ENCODE measurements at regions of chr3 and their contacts with region 1.

Region 1: DNA sequence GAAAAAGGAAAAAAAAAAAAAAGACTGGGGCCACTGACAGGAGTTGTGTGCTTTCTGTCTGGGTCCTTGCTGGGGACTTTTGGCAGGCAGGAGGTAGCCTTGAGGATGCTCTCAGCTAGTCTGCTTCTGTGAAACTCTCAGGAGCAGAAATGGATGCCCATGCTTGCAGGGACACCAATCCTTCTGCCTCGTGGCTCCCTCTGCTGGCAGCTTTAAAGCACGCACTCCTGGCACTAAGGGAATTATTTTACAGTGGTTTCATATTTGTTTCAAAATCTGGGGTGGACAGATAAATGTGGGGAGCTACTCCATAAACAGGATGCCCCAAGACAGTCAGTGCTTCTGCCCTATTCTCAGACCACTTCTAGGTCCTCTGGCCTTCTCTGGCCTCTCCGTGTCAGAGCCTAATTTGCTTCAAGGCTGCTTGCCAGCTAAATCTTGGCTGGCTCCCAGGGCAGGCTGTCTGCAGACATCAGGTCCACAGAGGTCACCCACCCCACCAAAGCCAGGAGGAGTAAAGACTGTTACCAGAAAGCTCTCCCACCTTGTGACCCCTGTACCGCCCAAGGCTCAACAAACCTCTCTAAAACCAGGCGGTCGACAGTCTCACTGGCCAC is 17.1 kb downstream of the TRAIP start:
- DNase-seq: peak; percentile 52
- H3K4me3 ChIP-seq: no peak overlapping the region
- H3K27ac ChIP-seq: no peak overlapping the region
- H3K4me1 ChIP-seq: no peaks in the 10 kb centered on the region
- H3K27me3 ChIP-seq: no peaks in the 10 kb centered on the region
- CTCF ChIP-seq: peak; percentile 93 to 98

Region 2: DNA sequence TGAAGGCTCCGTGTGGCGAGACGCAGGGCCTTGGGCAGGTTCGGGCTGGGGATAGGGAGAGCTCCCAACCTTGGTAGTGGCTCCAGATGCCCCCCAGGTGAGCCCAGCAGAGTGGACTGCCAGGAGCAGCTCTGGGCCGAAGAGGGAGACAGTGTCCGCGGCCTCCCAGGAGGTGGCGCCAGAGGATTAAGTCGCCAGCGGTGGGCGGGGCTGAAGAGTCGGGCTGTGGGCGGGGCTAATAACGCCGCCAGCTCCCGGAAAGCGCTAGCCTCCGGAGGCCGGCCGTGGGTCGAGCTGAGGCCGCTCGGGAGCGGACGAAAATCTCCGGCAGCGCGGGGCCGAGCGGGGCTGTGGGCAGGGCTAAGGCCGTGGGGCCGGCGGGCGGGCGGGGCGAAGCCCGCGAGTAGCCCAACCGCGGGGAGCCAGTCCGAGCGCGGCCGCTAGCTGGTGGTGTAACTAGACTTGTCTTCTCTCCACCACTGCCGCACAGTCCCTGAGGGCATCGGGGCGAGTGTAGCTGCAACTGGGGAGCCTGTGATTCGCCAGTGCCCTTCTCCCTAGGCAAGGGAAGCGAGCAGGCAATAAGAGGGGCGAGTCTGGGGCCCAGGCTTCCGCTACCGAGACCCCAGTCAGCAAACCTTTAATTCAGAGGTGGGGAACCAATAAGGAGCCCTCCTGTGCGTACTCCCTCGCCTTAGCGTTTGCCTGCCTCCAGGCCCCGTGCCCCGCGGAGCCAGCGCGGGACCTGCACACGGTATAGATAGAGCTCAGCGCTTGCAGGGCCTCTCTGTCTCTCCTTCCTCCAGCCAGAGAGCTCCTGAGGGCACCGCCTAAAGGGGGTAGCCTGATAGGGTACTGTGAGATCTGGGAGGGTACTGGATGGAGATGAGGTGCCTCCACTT is 299.4 kb before region 1 on chr3:
- CTCF ChIA-PET with region 1: no interaction called
- dilution Hi-C with region 1: no loop called
- in situ Hi-C with region 1: no loop called
- intact Hi-C with region 1: loop called (anchors 1 kb)
- DNase-seq: peak; percentile 93
- H3K4me3 ChIP-seq: peak overlapping the region; percentile 30 to 47 (median 42)
- H3K27ac ChIP-seq: no peak overlapping the region
- H3K4me1 ChIP-seq: peaks cover 5% of the 10 kb centered on the region
- H3K27me3 ChIP-seq: no peaks in the 10 kb centered on the region
- CTCF ChIP-seq: peak; percentile 55 to 89

Region 3: GRCh38 chr3:49723628-49724551 is 115.4 kb before region 1 on chr3 and contains the start of gene GMPPB:
- CTCF ChIA-PET with region 1: no interaction called
- dilution Hi-C with region 1: no loop called
- in situ Hi-C with region 1: no loop called
- intact Hi-C with region 1: loop called (anchors 1 kb)
- DNase-seq: peak; percentile 97
- H3K4me3 ChIP-seq: peak within 1 kb of the TSS; percentile 51 to 85 (median 84)
- H3K27ac ChIP-seq: peak within 1 kb of the TSS; percentile 92
- H3K4me1 ChIP-seq: peaks cover 25% of the 10 kb centered on the region
- H3K27me3 ChIP-seq: no peaks in the 10 kb centered on the region
- CTCF ChIP-seq: no peak
- total RNA-seq, gene GMPPB: 19.2 to 38.4 TPM

Region 4: GRCh38 chr3:49746006-49746405 is 93.3 kb before region 1 on chr3:
- CTCF ChIA-PET with region 1: no interaction called
- dilution Hi-C with region 1: no loop called
- in situ Hi-C with region 1: no loop called
- intact Hi-C with region 1: no loop called
- DNase-seq: peak; percentile 77
- H3K4me3 ChIP-seq: no peak overlapping the region
- H3K27ac ChIP-seq: no peak overlapping the region
- H3K4me1 ChIP-seq: peaks cover 14% of the 10 kb centered on the region
- H3K27me3 ChIP-seq: no peaks in the 10 kb centered on the region
- CTCF ChIP-seq: peak in 1 of 2 donors; percentile 7

Region 5: GRCh38 chr3:49802719-49803464 is 36.4 kb before region 1 on chr3 and contains the start of gene INKA1:
- CTCF ChIA-PET with region 1: no interaction called
- dilution Hi-C with region 1: no loop called
- in situ Hi-C with region 1: no loop called
- intact Hi-C with region 1: loop called (anchors 1 kb)
- DNase-seq: peak; percentile 82
- H3K4me3 ChIP-seq: peak within 1 kb of the TSS; percentile 70 to 85 (median 77)
- H3K27ac ChIP-seq: peak within 1 kb of the TSS; percentile 40
- H3K4me1 ChIP-seq: peaks cover 43% of the 10 kb centered on the region
- H3K27me3 ChIP-seq: no peaks in the 10 kb centered on the region
- CTCF ChIP-seq: peak; percentile 79 to 92
- total RNA-seq, gene INKA1: 17.3 to 22.6 TPM

Region 6: DNA sequence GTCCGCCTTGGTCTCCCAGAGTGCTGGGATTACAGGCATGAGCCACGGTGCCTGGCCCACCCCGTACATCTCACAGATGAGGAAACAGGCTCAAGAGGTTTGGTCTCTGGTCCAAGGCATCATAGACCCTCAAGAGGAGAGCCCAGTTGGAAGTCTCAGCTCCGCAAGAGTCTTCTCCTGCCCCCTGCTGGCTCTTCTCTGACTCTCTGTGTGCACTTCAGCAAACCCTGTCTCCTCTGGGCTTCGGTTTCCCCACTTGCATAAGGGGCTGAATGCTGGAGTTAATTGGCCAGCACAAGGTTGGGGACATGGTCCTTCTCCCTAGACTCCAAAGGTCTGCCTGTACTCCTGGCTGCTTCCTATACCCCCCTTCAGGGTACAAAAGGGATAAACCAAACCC is 60.5 kb after region 1 on chr3:
- CTCF ChIA-PET with region 1: interaction called, 18 read pairs
- dilution Hi-C with region 1: loop called (anchors 10 kb)
- in situ Hi-C with region 1: no loop called
- intact Hi-C with region 1: no loop called
- DNase-seq: no peak
- H3K4me3 ChIP-seq: peak overlapping the region in 1 of 3 experiments; percentile 14
- H3K27ac ChIP-seq: peak overlapping the region; percentile 84
- H3K4me1 ChIP-seq: peaks cover 62% of the 10 kb centered on the region
- H3K27me3 ChIP-seq: no peaks in the 10 kb centered on the region
- CTCF ChIP-seq: peak in 1 of 2 donors; percentile 24

Region 7: GRCh38 chr3:49929331-49930240 is 90.3 kb after region 1 on chr3 and contains the start of gene MON1A:
- CTCF ChIA-PET with region 1: interaction called, 4 read pairs
- dilution Hi-C with region 1: no loop called
- in situ Hi-C with region 1: no loop called
- intact Hi-C with region 1: loop called (anchors 1 kb)
- DNase-seq: peak; percentile 89
- H3K4me3 ChIP-seq: peak within 1 kb of the TSS; percentile 65 to 72 (median 66)
- H3K27ac ChIP-seq: no peak within 1 kb of the TSS
- H3K4me1 ChIP-seq: peaks cover 25% of the 10 kb centered on the region
- H3K27me3 ChIP-seq: no peaks in the 10 kb centered on the region
- CTCF ChIP-seq: peak in 1 of 2 donors; percentile 47
- total RNA-seq, gene MON1A: 11.5 to 15.9 TPM

Region 8: DNA sequence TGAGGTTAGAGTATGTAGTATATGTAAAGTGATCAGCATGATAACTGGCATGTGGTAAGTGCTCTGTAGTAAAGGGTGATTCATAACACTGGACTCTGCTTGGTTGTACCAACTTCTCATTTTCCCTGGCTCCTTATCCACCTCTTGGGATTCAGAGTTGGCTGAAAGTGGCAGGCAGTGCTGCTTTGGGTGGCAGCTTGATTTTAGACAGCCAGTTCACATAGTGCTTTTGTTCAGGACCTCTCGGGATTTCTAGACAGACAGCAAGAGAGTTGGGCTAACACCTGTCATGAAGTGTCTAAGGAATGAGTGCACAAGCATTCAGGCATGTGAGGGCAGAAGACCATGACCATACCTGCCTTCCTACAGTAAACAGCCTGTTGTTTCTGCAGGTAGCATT is 169.6 kb after region 1 on chr3:
- CTCF ChIA-PET with region 1: no interaction called
- dilution Hi-C with region 1: no loop called
- in situ Hi-C with region 1: no loop called
- intact Hi-C with region 1: no loop called
- DNase-seq: peak; percentile 48
- H3K4me3 ChIP-seq: no peak overlapping the region
- H3K27ac ChIP-seq: no peak overlapping the region
- H3K4me1 ChIP-seq: peaks cover 8% of the 10 kb centered on the region
- H3K27me3 ChIP-seq: no peaks in the 10 kb centered on the region
- CTCF ChIP-seq: no peak

Measured in mammary epithelial cell (primary cell).